Common myeloid progenitor, CD34-positive (primary cell): ENCODE measurements at regions of chr15 and their contacts with region 1.

Region 1: GRCh38 chr15:70099167-70099966 is 1.6 kb upstream of the TLE3 start:
- DNase-seq: peak; percentile 98 to 99 (median 99)
- H3K4me3 ChIP-seq: peak overlapping the region; percentile 50 to 93 (median 70)
- H3K27ac ChIP-seq: peak overlapping the region; percentile 54 to 87
- H3K4me1 ChIP-seq: peaks cover 14 to 77% (median 69%) of the 10 kb centered on the region in 4 experiments
- H3K27me3 ChIP-seq: no peaks in the 10 kb centered on the region

Region 2: DNA sequence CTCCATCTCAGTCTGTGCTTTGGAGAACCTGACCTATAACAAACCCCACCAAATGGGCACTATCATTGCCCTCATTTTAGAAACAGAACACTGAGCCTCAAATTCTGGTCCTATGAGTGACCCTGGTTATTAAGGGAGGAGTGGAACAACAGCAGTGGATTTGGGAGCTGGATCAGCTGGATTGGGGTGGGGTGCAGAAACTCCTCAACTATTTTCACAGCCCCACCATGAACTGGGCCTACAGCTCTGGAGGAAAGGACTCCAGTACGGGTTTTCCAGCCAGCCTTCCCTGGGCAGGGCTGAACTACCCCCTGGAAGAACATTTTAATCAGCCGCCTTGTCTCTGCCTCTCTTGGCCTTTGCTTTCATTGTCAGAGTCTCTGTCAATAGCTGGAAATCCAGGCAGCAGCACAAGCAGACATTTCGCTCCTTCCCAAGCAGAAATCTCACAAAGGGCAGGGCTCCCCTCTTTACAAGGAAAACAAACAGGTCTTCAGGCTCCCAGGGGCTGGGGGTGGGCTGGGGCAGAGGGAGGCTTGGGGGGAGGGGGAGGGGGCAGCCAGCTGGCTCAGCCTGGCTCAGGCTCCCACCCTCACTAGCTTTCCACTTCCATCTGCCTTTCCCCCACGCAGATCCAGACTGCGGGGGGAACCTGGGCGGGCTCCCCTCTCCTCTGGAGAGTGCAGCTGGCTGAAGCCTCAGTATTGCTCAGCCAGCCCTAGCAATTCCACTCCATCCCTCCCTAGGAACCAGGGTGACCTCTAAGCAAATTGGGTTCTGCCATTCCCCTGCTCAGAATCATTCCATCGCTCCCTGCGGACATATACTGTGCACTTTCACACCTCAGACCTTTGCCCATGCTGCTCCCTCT is 12.1 kb after region 1 on chr15:
- CTCF ChIA-PET with region 1: interaction called, 21 read pairs
- POLR2A ChIA-PET with region 1: interaction called, 16 read pairs
- DNase-seq: peak; percentile 44 to 72 (median 72)
- H3K4me3 ChIP-seq: peak overlapping the region in 1 of 7 experiments; percentile 47
- H3K27ac ChIP-seq: no peak overlapping the region
- H3K4me1 ChIP-seq: peaks cover 0 to 50% (median 30%) of the 10 kb centered on the region in 4 experiments
- H3K27me3 ChIP-seq: no peaks in the 10 kb centered on the region

Region 3: GRCh38 chr15:70140543-70141375 is 41.4 kb after region 1 on chr15:
- CTCF ChIA-PET with region 1: interaction called, 15 read pairs
- POLR2A ChIA-PET with region 1: interaction called, 9 read pairs
- DNase-seq: peak; percentile 70 to 94 (median 92)
- H3K4me3 ChIP-seq: peak overlapping the region in 4 of 7 experiments; percentile 14 to 46 (median 24)
- H3K27ac ChIP-seq: no peak overlapping the region
- H3K4me1 ChIP-seq: peaks cover 8 to 54% (median 48%) of the 10 kb centered on the region in 4 experiments
- H3K27me3 ChIP-seq: no peaks in the 10 kb centered on the region